Calu3 (cell line): ENCODE measurements at regions of chr1 and their contacts with region 1.

Region 1: GRCh38 chr1:207963427-207964194 is 52.7 kb upstream of the CD34 start:
- DNase-seq: peak; percentile 94
- H3K4me3 Mint-ChIP-seq: peak overlapping the region; percentile 72
- H3K27ac Mint-ChIP-seq: peak overlapping the region; percentile 53
- H3K4me1 Mint-ChIP-seq: peaks cover 22% of the 10 kb centered on the region
- H3K27me3 Mint-ChIP-seq: peaks cover 15% of the 10 kb centered on the region
- CTCF ChIP-seq: peak; percentile 97

Region 2: GRCh38 chr1:207676153-207676552 is 287.5 kb before region 1 on chr1:
- CTCF ChIA-PET with region 1: no interaction called
- intact Hi-C with region 1: no loop called
- DNase-seq: no peak
- H3K4me3 Mint-ChIP-seq: no peak overlapping the region
- H3K27ac Mint-ChIP-seq: no peak overlapping the region
- H3K4me1 Mint-ChIP-seq: peaks cover 11% of the 10 kb centered on the region
- H3K27me3 Mint-ChIP-seq: peaks cover 3% of the 10 kb centered on the region
- CTCF ChIP-seq: no peak

Region 3: DNA sequence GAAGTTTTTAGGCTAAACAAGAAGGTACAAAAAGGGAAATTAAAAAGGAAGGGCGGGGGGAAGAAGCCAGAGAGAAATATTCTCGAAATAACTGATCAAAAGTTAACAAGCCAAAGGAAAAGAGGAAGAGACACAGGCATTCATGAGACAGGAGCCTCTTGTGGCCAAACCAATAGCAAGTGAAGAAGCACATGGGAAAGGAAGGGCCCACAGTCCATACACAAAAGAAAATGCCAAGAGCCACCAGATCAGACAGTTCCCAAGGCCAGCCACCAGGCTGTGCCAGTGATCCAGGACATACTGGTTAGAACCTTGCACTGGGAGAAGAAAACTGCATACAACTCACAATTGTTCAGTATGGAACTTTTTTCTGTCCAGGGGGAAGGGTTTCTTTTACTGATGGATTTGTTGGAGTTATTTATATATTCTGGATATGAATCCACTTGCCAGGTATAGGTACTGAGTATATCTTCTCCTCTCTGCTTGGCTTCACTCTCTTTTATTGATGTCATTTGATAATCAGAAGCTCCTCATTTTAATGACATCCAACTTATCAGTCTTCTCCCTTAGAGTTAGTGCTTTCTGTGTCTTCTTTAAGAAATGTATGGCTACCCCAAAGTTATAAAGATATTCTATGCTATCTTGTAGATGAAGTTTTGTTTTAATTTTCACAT is 135.0 kb before region 1 on chr1:
- CTCF ChIA-PET with region 1: interaction called, 6 read pairs
- intact Hi-C with region 1: loop called (anchors 1 kb)
- DNase-seq: peak; percentile 78
- H3K4me3 Mint-ChIP-seq: no peak overlapping the region
- H3K27ac Mint-ChIP-seq: peak overlapping the region; percentile 30
- H3K4me1 Mint-ChIP-seq: peaks cover 60% of the 10 kb centered on the region
- H3K27me3 Mint-ChIP-seq: no peaks in the 10 kb centered on the region
- CTCF ChIP-seq: peak; percentile 84

Region 4: DNA sequence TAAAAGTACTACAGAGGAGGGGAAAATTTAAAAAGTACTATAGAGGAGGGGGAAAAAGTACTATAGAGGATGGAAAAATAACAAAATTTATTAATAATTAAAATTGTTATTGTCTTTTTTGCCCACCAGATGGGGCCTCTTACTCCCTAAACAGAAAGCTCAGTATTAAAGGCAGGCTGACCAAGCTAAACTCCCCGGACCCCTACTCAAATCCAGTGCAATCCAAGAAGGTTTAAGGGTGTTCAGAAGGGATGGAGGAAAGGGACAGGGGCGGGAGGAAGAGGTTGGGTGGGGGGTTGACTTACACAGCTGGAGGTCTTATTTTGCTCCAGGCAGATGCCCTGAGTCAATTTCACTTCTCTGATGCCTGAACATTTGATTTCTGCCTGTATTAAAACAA is 66.4 kb before region 1 on chr1:
- CTCF ChIA-PET with region 1: interaction called, 54 read pairs
- intact Hi-C with region 1: loop called (anchors 1 kb)
- DNase-seq: no peak
- H3K4me3 Mint-ChIP-seq: no peak overlapping the region
- H3K27ac Mint-ChIP-seq: no peak overlapping the region
- H3K4me1 Mint-ChIP-seq: no peaks in the 10 kb centered on the region
- H3K27me3 Mint-ChIP-seq: no peaks in the 10 kb centered on the region
- CTCF ChIP-seq: peak; percentile 65

Region 5: GRCh38 chr1:207908107-207908734 is 55.4 kb before region 1 on chr1:
- CTCF ChIA-PET with region 1: interaction called, 22 read pairs
- intact Hi-C with region 1: no loop called
- DNase-seq: peak; percentile 22
- H3K4me3 Mint-ChIP-seq: no peak overlapping the region
- H3K27ac Mint-ChIP-seq: no peak overlapping the region
- H3K4me1 Mint-ChIP-seq: peaks cover 18% of the 10 kb centered on the region
- H3K27me3 Mint-ChIP-seq: peaks cover 38% of the 10 kb centered on the region
- CTCF ChIP-seq: no peak

Region 6: DNA sequence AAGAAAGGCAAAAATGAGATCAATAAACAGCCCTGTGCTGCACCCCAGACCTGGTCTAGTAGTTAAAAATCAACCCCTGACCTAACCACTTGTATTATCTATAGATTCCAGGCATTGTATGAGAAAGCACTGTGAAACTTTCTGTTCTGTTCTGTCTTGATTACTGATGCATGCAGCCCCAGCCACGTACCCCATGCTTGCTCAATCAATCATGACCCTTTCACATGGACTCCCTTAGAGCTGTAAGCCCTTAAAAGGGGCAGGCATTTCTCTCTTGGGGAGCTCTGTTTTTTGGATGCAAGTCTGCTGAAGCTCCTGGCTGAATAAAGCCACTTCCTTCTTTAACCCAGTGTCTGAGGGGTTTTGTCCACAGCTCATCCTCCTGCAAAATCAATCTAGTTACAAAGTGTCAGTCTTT is 28.4 kb before region 1 on chr1:
- CTCF ChIA-PET with region 1: interaction called, 15 read pairs
- intact Hi-C with region 1: no loop called
- DNase-seq: peak; percentile 69
- H3K4me3 Mint-ChIP-seq: peak overlapping the region; percentile 43
- H3K27ac Mint-ChIP-seq: peak overlapping the region; percentile 71
- H3K4me1 Mint-ChIP-seq: peaks cover 62% of the 10 kb centered on the region
- H3K27me3 Mint-ChIP-seq: no peaks in the 10 kb centered on the region
- CTCF ChIP-seq: no peak